Stomach (tissue), 19 donors: ENCODE measurements at regions of chr19 and their contacts with region 1.

Region 1: GRCh38 chr19:18469069-18469846 is 31.3 kb upstream of the ISYNA1 start:
- DNase-seq: peak; percentile 72 to 86
- H3K4me3 ChIP-seq: no peak overlapping the region
- H3K27ac ChIP-seq: peak overlapping the region in 4 of 5 donors; percentile 17 to 85 (median 39)
- H3K4me1 ChIP-seq: peaks cover 61 to 81% (median 70%) of the 10 kb centered on the region in 4 donors
- H3K27me3 ChIP-seq: no peaks in the 10 kb centered on the region
- CTCF ChIP-seq: peak in 5 of 7 experiments; percentile 56 to 86 (median 66)
- EP300 ChIP-seq: no peak
- POLR2A ChIP-seq: no peak

Region 2: GRCh38 chr19:18562086-18562485 is 92.8 kb after region 1 on chr19:
- intact Hi-C with region 1: loop called (anchors 10 kb)
- DNase-seq: no peak
- H3K4me3 ChIP-seq: no peak overlapping the region
- H3K27ac ChIP-seq: peak overlapping the region; percentile 36 to 81 (median 63)
- H3K4me1 ChIP-seq: peaks cover 12 to 32% (median 17%) of the 10 kb centered on the region in 4 donors
- H3K27me3 ChIP-seq: no peaks in the 10 kb centered on the region
- CTCF ChIP-seq: no peak
- EP300 ChIP-seq: no peak
- POLR2A ChIP-seq: no peak